ENCODE measurements at regions of chr6 and their contacts with region 1.

Region 1: GRCh38 chr6:45922728-45923351 is 92.8 kb downstream of the CLIC5 start:
- DNase-seq: peak; percentile 83
- H3K4me3 Mint-ChIP-seq: peak overlapping the region; percentile 67
- H3K27ac Mint-ChIP-seq: peak overlapping the region; percentile 97
- H3K4me1 Mint-ChIP-seq: peaks cover 52% of the 10 kb centered on the region
- H3K27me3 Mint-ChIP-seq: no peaks in the 10 kb centered on the region

Region 2: DNA sequence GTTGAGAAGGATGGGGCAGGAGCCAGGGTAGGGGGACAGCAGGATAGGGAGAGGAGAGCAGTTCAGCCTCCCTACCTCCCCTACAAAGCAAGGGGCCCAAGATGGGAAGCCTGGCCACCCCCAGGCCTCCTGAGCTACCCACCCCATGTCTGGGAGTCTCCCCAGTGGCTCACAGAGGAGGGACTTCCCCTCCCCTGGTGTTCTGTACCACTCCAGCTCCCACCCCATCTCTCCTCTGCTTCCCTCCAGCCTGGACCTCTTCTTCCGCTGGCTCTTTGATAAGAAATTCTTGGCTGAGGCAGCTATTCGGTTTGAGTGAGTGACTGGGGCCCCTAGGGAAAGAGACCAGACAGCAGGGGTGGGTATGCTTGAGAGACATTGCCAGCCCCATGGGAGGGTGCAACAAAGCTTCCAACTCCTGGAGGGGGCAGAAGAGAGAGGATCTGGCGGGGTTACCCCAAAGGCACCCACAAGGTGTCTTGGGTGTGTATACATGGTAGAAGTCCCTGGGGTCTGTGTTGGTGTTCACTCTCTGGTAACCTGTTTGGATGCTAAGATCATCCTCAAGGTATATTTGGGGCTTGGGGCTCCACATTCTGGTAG is 1772.4 kb before region 1 on chr6:
- CTCF ChIA-PET with region 1: no interaction called
- POLR2A ChIA-PET with region 1: no interaction called
- intact Hi-C with region 1: no loop called
- DNase-seq: no peak
- H3K4me3 Mint-ChIP-seq: no peak overlapping the region
- H3K27ac Mint-ChIP-seq: no peak overlapping the region
- H3K4me1 Mint-ChIP-seq: peaks cover 5% of the 10 kb centered on the region
- H3K27me3 Mint-ChIP-seq: no peaks in the 10 kb centered on the region

Region 3: DNA sequence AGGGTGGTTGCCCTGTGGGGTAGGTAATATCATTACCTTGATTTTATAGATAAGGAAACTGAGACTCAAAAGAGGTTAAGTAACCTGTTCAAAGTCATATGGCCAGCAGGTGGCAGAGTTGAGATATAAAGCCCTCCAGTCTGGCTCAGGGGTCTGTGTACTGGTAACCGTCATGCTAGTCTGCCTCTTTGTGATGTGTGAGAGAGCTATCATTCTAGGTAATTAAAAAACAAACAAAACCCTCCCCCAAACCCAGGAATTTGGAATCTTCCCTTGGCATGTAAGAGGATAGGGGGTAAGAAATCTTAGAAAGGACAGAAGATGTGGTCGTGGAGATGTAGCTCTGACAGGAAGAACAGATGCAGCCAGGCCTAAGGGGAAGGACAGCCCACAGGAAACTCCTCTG is 1329.3 kb before region 1 on chr6:
- CTCF ChIA-PET with region 1: interaction called, 6 read pairs
- POLR2A ChIA-PET with region 1: no interaction called
- intact Hi-C with region 1: loop called (anchors 1 kb)
- DNase-seq: peak; percentile 71
- H3K4me3 Mint-ChIP-seq: no peak overlapping the region
- H3K27ac Mint-ChIP-seq: no peak overlapping the region
- H3K4me1 Mint-ChIP-seq: peaks cover 4% of the 10 kb centered on the region
- H3K27me3 Mint-ChIP-seq: peaks cover 10% of the 10 kb centered on the region

Region 4: GRCh38 chr6:45163952-45164766 is 758.7 kb before region 1 on chr6:
- CTCF ChIA-PET with region 1: interaction called, 3 read pairs
- POLR2A ChIA-PET with region 1: no interaction called
- intact Hi-C with region 1: loop called (anchors 1 kb)
- DNase-seq: peak; percentile 60
- H3K4me3 Mint-ChIP-seq: peak overlapping the region; percentile 46
- H3K27ac Mint-ChIP-seq: peak overlapping the region; percentile 74
- H3K4me1 Mint-ChIP-seq: peaks cover 42% of the 10 kb centered on the region
- H3K27me3 Mint-ChIP-seq: no peaks in the 10 kb centered on the region

Region 5: DNA sequence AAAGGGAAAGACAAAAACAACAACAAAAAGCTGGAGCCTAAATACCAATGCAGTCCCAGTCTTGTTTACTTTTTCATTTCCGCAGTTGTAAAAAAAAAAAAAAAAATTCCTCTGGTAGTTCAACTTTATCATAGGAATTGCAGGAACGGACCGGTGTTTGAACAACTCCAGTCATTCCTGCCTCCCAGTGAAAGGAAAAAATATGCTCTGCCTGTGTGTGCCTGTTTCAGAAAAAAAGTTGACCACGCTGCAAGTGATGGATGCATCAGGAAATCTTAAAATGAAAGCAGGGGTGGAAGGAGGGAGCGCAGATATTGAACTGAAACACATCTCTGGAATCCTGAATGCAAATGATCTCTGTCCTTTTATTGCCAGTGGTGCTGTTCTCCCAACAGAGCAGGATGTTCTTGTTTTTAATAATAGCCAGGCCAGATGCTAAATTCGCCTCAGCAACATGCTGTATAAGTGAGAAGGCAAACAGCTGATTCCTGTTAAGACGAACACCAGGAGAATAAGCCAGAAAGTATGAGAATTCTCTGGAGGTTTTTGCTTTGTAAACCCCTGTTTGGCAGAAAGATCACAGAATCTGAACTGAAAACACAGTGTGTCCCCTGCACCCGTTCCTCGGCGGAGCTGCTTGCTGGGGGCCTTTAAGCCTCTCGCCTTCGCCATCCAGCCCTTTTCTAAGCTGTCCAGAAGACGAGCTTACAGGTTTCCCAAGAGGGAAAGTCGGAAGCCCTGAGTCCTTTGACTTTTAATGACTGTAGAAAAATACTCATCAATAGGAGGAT is 366.7 kb before region 1 on chr6:
- CTCF ChIA-PET with region 1: no interaction called
- POLR2A ChIA-PET with region 1: no interaction called
- intact Hi-C with region 1: loop called (anchors 1 kb)
- DNase-seq: no peak
- H3K4me3 Mint-ChIP-seq: no peak overlapping the region
- H3K27ac Mint-ChIP-seq: no peak overlapping the region
- H3K4me1 Mint-ChIP-seq: peaks cover 49% of the 10 kb centered on the region
- H3K27me3 Mint-ChIP-seq: no peaks in the 10 kb centered on the region

Region 6: GRCh38 chr6:45737331-45738056 is 185.3 kb before region 1 on chr6:
- CTCF ChIA-PET with region 1: interaction called, 3 read pairs
- POLR2A ChIA-PET with region 1: interaction called, 6 read pairs
- intact Hi-C with region 1: loop called (anchors 1 kb)
- DNase-seq: peak; percentile 24
- H3K4me3 Mint-ChIP-seq: peak overlapping the region; percentile 10
- H3K27ac Mint-ChIP-seq: peak overlapping the region; percentile 75
- H3K4me1 Mint-ChIP-seq: peaks cover 59% of the 10 kb centered on the region
- H3K27me3 Mint-ChIP-seq: peaks cover 8% of the 10 kb centered on the region

Region 7: DNA sequence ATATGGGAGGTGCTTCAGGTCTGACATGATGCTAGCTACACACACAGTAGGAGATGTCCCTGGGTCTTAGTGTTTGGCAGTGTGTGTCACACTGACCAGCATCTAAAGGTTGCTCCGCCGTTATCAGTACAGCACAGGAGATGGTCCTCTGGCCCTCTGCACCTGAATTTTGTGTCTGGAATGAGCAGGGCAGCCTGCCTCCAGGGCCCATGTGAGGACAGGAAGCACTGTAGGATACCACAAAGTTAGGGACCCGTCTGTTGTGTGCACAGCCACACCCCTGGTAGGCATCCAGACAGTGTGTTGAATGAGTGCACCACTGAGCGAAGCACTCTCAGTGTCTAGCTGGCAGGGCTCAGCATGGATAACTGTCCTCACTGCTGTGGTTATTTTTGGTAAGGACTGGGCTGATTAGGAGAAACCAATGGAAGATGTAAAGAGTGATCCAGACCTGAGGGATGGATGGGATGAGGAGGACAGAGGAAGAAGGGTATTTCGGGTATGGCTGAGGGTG is 85.9 kb before region 1 on chr6:
- CTCF ChIA-PET with region 1: interaction called, 15 read pairs
- POLR2A ChIA-PET with region 1: interaction called, 51 read pairs
- intact Hi-C with region 1: loop called (anchors 1 kb)
- DNase-seq: no peak
- H3K4me3 Mint-ChIP-seq: no peak overlapping the region
- H3K27ac Mint-ChIP-seq: peak overlapping the region; percentile 56
- H3K4me1 Mint-ChIP-seq: peaks cover 43% of the 10 kb centered on the region
- H3K27me3 Mint-ChIP-seq: no peaks in the 10 kb centered on the region

Region 8: GRCh38 chr6:45991189-45991588 is 68.3 kb after region 1 on chr6:
- CTCF ChIA-PET with region 1: no interaction called
- POLR2A ChIA-PET with region 1: no interaction called
- intact Hi-C with region 1: no loop called
- DNase-seq: no peak
- H3K4me3 Mint-ChIP-seq: no peak overlapping the region
- H3K27ac Mint-ChIP-seq: no peak overlapping the region
- H3K4me1 Mint-ChIP-seq: peaks cover 4% of the 10 kb centered on the region
- H3K27me3 Mint-ChIP-seq: no peaks in the 10 kb centered on the region

Measured in activated CD4-positive, alpha-beta memory T cell treated with anti-CD3 and anti-CD28 coated beads for 36 hours (primary cell).